ENCODE measurements at regions of chr2 and their contacts with region 1.

Region 1: GRCh38 chr2:214004463-214004862 is 406.4 kb upstream of the VWC2L start:
- DNase-seq: no peak

Region 2: DNA sequence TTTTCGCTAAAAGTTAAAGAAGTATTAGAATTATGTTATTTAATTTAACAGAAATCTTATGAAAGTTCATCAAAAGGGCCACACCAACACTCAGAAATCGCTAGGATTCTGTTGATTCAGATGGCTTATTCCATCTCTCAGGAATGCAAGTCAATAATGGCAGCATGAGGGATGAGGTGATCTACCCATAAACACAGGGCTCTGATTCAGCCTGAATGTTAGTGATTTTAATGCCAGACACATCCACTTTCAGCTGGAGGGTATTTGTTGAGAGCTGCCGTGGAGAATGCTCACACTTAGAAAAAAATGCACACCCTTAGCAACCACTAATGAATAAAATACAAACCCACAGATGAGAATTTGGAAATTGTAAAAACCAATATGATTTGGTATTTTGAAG is 1292.6 kb before region 1 on chr2:
- intact Hi-C with region 1: loop called in 1 of 2 experiments (anchors 5 kb)
- DNase-seq: no peak

Region 3: DNA sequence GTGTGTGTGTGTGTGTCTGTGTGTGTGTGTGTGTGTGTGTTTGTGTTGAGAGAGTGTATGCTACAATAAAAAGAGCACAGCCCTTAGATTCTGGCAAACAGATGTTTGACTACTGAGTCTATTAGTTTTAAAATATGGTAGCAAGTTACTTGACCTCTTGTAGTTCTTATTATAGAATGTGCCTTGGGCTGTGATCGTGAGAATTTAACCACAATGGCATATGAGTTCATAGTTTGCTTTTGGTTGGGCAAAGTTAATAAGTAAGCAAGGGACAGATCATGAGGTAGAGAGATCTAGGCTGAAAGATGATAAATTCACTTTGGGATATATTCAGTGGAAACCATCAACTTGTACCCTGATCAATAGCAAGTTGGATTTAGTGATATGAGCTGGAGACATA is 72.1 kb after region 1 on chr2:
- intact Hi-C with region 1: no loop called
- DNase-seq: no peak